T-cell (primary cell): ENCODE measurements at regions of chr21 and their contacts with region 1.

Region 1: GRCh38 chr21:33479679-33480480 is at the start of gene TMEM50B:
- DNase-seq: peak; percentile 83 to 98 (median 93)
- ATAC-seq: peak; percentile 90 to 93 (median 91)
- H3K4me3 ChIP-seq: peak within 1 kb of the TSS; percentile 84 to 86
- H3K4me3 Mint-ChIP-seq: peak within 1 kb of the TSS; percentile 91 to 92 (median 91)
- H3K27ac ChIP-seq: peak within 1 kb of the TSS; percentile 73
- H3K27ac Mint-ChIP-seq: peak within 1 kb of the TSS; percentile 95 to 96
- H3K4me1 ChIP-seq: peaks cover 9 to 20% of the 10 kb centered on the region in 2 experiments
- H3K4me1 Mint-ChIP-seq: peaks cover 16 to 28% (median 23%) of the 10 kb centered on the region in 3 donors
- H3K27me3 ChIP-seq: no peaks in the 10 kb centered on the region
- H3K27me3 Mint-ChIP-seq: no peaks in the 10 kb centered on the region
- total RNA-seq, gene TMEM50B: 47.0 to 98.9 (median 73.4) TPM

Region 2: DNA sequence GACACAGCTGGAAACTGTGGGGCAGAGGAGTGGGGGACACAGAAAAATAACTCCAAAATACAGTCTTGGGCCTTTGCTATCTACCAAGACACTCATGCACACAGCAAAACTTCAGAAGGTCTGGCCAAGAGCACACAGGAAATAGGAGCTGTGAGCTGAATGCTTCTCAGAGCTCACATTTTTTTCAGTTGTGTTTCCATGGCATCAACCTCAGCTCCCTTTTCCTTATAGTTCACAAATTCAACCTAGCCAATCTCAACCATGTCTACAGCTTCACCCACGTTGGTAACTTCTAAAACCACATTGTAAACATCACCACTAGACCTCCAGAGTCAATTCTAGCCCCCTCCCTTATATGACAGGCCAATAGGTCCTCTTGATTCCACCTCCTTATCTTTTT is 732.5 kb before region 1 on chr21:
- CTCF ChIA-PET with region 1: no interaction called
- POLR2A ChIA-PET with region 1: interaction called in 1 of 2 experiments, 10 read pairs
- DNase-seq: no peak
- ATAC-seq: peak in 2 of 4 experiments; percentile 24 to 48
- H3K4me3 ChIP-seq: no peak overlapping the region
- H3K4me3 Mint-ChIP-seq: no peak overlapping the region
- H3K27ac ChIP-seq: no peak overlapping the region
- H3K27ac Mint-ChIP-seq: peak overlapping the region; percentile 25 to 78
- H3K4me1 ChIP-seq: peaks cover 6 to 8% of the 10 kb centered on the region in 2 experiments
- H3K4me1 Mint-ChIP-seq: peaks cover 17 to 27% (median 17%) of the 10 kb centered on the region in 3 donors
- H3K27me3 ChIP-seq: no peaks in the 10 kb centered on the region
- H3K27me3 Mint-ChIP-seq: no peaks in the 10 kb centered on the region

Region 3: GRCh38 chr21:33491373-33492102 is 11.7 kb after region 1 on chr21 and contains the start of gene DNAJC28:
- CTCF ChIA-PET with region 1: interaction called, 7 to 42 read pairs
- POLR2A ChIA-PET with region 1: interaction called, 4 to 19 read pairs
- DNase-seq: peak; percentile 80 to 97 (median 90)
- ATAC-seq: peak; percentile 96 to 99 (median 97)
- H3K4me3 ChIP-seq: peak within 1 kb of the TSS; percentile 81 to 90
- H3K4me3 Mint-ChIP-seq: peak within 1 kb of the TSS; percentile 84 to 91 (median 89)
- H3K27ac ChIP-seq: peak within 1 kb of the TSS; percentile 59
- H3K27ac Mint-ChIP-seq: peak within 1 kb of the TSS; percentile 78 to 92
- H3K4me1 ChIP-seq: peaks cover 5 to 13% of the 10 kb centered on the region in 2 experiments
- H3K4me1 Mint-ChIP-seq: peaks cover 10 to 14% (median 11%) of the 10 kb centered on the region in 3 donors
- H3K27me3 ChIP-seq: peaks cover 0 to 5% of the 10 kb centered on the region in 2 experiments
- H3K27me3 Mint-ChIP-seq: no peaks in the 10 kb centered on the region
- total RNA-seq, gene DNAJC28: 0.53 to 1.2 (median 0.75) TPM in 4 of 5 donors, not detected in the other

Region 4: GRCh38 chr21:33542640-33543504 is 63.0 kb after region 1 on chr21 and contains the start of gene SON:
- CTCF ChIA-PET with region 1: interaction called, 3 to 4 read pairs
- POLR2A ChIA-PET with region 1: interaction called, 3 to 14 read pairs
- DNase-seq: peak; percentile 86 to 99 (median 98)
- ATAC-seq: peak; percentile 90 to 92 (median 92)
- H3K4me3 ChIP-seq: peak within 1 kb of the TSS; percentile 94 to 100
- H3K4me3 Mint-ChIP-seq: peak within 1 kb of the TSS; percentile 94 to 99 (median 98)
- H3K27ac ChIP-seq: peak within 1 kb of the TSS; percentile 100
- H3K27ac Mint-ChIP-seq: peak within 1 kb of the TSS; percentile 100
- H3K4me1 ChIP-seq: peaks cover 24 to 41% of the 10 kb centered on the region in 2 experiments
- H3K4me1 Mint-ChIP-seq: peaks cover 49 to 52% (median 49%) of the 10 kb centered on the region in 3 donors
- H3K27me3 ChIP-seq: no peaks in the 10 kb centered on the region
- H3K27me3 Mint-ChIP-seq: no peaks in the 10 kb centered on the region
- total RNA-seq, gene SON: 360 to 418 (median 374) TPM